ENCODE measurements at regions of chr1 and their contacts with region 1.

Region 1: DNA sequence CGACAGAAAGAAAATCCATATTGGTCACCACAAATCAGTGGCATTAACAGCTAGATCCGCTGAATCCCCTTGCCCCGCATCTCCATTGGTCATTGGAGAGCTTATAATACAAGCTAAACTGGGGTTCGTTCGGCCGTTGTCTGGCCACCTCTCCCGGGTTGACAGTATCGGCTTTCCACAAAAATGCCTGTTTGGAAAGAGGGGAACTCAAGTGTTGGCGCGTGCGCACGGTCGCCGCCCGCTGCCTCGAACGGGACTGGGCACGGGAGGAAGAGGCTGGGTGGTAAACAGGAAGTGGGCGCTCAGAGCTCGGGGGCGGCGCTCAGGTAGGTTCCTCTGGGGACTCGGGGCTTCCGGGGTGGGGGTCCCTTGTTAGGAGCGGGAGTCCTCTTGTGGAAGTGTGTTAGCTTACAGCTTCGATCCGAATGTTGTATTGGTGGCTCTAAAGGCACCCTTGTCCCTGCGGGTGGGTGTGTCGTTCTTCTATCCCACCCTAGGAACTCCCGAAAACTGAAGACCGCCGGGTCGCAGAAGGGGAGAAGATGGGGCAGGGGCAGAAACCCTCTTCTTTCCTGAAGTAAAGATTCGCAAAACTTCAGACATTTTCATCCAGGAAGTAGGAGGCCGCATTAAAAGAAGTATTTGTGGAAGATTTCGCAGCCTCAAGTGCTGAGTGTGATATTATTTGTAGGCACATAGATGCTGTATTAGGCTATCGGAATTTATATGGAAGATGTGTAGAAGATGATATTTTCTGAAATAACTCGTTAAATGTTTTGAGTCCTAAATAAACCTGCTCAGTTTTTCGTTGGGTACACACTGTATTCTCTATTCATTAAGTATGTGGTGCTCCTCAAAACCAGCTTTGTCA is 962 bp downstream of the BROX start:
- DNase-seq: peak; percentile 99
- H3K4me3 Mint-ChIP-seq: peak overlapping the region; percentile 86
- H3K27ac Mint-ChIP-seq: peak overlapping the region; percentile 97
- H3K4me1 Mint-ChIP-seq: peaks cover 40% of the 10 kb centered on the region
- H3K27me3 Mint-ChIP-seq: no peaks in the 10 kb centered on the region
- CTCF ChIP-seq: no peak

Region 2: DNA sequence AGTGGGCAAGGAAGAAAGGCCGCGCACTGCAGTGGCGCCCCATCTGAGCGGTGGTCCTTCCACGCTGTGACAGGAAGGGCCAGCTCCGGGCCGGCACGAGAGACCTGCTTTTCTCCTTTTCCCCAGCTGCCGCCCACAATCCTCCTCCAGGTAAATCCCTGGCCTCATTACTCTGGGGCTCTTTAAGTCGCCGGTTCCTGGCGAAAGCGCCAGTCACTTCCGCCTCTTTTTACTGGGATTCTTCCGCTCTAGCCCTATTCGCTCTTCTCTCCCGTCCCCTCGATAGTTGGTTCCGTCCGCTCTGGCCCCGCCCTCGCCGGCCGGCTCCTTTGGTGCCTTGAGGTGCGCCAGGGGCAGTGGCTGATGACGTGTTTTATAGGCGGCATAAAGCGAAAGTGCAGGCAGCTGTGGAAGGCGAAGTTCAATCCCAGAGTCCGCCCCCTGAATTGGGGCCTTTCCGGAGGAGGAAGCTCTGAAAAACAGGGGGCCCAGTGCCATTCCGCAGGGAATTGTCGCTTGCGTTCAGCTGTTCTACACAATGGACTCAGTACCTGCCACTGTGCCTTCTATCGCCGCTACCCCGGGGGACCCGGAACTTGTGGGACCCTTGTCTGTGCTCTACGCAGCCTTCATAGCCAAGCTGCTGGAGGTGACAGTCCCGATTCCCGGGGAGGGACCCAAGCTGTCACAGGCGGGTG is 69.2 kb before region 1 on chr1:
- CTCF ChIA-PET with region 1: interaction called, 3 read pairs
- POLR2A ChIA-PET with region 1: interaction called, 70 read pairs
- intact Hi-C with region 1: loop called (anchors 1 kb)
- DNase-seq: peak; percentile 100
- H3K4me3 Mint-ChIP-seq: peak overlapping the region; percentile 85
- H3K27ac Mint-ChIP-seq: peak overlapping the region; percentile 97
- H3K4me1 Mint-ChIP-seq: peaks cover 10% of the 10 kb centered on the region
- H3K27me3 Mint-ChIP-seq: no peaks in the 10 kb centered on the region
- CTCF ChIP-seq: no peak

Region 3: GRCh38 chr1:222654849-222655248 is 58.5 kb before region 1 on chr1:
- CTCF ChIA-PET with region 1: no interaction called
- POLR2A ChIA-PET with region 1: interaction called, 11 read pairs
- intact Hi-C with region 1: no loop called
- DNase-seq: no peak
- H3K4me3 Mint-ChIP-seq: no peak overlapping the region
- H3K27ac Mint-ChIP-seq: peak overlapping the region; percentile 1
- H3K4me1 Mint-ChIP-seq: no peaks in the 10 kb centered on the region
- H3K27me3 Mint-ChIP-seq: no peaks in the 10 kb centered on the region
- CTCF ChIP-seq: no peak

Region 4: DNA sequence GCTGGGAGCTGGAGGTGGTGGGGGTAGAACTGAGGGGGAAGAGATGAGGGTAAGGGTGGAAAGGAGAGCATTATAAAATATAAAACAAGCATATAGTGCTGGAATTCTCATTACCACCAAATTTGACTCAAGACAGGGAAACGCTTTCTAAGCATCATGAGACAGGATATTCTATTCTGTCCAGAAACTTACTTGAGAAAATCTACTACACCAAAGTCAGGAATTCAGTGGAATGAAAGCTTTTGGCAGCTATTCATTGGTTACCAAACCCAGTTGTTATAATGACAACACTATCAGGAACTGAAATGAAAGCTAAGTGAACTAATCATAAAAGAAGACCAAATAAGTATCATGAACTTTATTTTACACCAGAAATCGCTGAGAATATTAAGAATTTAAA is 15.5 kb before region 1 on chr1:
- CTCF ChIA-PET with region 1: interaction called, 5 read pairs
- POLR2A ChIA-PET with region 1: interaction called, 40 read pairs
- intact Hi-C with region 1: no loop called
- DNase-seq: no peak
- H3K4me3 Mint-ChIP-seq: no peak overlapping the region
- H3K27ac Mint-ChIP-seq: peak overlapping the region; percentile 66
- H3K4me1 Mint-ChIP-seq: peaks cover 9% of the 10 kb centered on the region
- H3K27me3 Mint-ChIP-seq: no peaks in the 10 kb centered on the region
- CTCF ChIP-seq: no peak

Region 5: DNA sequence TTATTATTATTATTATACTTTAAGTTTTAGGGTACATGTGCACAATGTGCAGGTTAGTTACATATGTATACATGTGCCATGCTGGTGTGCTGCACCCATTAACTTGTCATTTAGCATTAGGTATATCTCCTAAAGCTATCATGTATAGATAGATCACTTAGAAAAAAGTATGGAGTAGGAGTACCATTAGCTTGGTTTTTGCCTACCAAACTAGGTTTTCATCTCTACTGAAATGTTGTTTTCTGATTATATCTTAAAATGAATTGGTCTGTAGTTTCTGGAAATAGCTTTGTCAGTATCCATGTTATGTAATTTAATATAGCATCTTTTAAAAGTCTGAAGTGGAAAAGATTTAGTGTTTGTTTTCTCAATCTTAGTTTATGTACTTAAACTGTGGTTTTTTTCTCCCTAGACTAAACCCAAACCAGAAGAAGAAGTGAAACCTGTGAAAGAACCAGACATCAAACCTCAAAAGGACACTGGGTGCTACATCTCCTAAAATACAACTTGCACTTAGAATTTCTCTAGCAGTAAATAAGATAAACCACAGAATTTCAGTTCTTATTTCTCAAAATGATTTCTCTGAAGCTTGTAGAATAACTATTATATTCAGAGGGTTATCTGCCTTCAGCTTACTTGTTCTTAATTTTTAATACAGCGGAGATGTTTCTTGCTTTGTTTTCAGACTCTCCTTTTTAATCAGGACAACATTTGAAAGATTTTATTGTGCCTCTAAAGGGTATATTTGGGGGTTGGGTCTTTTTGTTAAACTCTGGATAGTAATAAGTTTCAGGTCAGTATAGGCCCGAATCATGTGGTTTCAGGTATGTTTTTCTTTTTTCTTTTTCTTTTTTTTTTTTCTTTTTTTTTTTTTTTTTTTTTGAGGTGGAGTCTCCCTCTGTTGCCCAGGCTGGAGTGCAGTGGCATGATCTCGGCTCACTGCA is 19.2 kb after region 1 on chr1:
- CTCF ChIA-PET with region 1: interaction called, 9 read pairs
- POLR2A ChIA-PET with region 1: interaction called, 32 read pairs
- intact Hi-C with region 1: no loop called
- DNase-seq: no peak
- H3K4me3 Mint-ChIP-seq: no peak overlapping the region
- H3K27ac Mint-ChIP-seq: no peak overlapping the region
- H3K4me1 Mint-ChIP-seq: no peaks in the 10 kb centered on the region
- H3K27me3 Mint-ChIP-seq: no peaks in the 10 kb centered on the region
- CTCF ChIP-seq: no peak

Region 6: DNA sequence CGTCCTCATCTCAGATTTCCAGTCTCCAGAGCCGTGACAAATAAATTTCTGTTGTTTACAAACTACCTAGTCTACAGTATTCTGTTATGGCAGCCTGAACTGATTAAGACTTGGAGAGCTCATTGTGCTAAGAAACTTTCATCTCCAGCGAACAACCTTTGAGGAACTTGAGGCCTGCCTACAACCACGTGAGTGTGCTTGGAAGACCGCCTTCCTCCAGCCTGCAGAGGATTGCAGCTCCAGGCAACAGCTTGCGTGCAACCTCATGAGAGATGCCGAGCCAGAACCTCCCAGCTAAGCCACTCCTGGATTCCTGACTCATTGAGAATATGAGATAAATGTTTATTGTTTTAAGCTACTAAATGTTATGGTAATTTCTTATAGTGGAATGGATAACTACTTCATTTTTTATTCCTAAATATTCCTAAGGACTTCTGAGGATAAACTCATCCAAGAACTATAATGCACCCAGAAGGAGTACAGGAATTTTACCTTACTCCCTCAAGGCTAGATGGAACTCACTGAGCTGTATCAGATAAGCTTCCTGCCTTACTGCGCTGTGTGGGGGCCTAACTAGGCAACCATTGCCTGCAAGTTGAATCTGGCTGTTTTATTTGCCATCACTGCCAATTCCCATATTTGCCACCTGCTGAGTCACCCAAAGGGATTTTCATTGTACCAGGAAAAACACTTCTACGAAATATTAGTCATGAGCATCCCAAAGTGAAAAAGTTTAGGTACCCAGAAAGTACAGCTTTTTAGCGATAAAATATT is 41.2 kb after region 1 on chr1:
- CTCF ChIA-PET with region 1: no interaction called
- POLR2A ChIA-PET with region 1: interaction called, 14 read pairs
- intact Hi-C with region 1: loop called (anchors 1 kb)
- DNase-seq: peak; percentile 98
- H3K4me3 Mint-ChIP-seq: peak overlapping the region; percentile 46
- H3K27ac Mint-ChIP-seq: peak overlapping the region; percentile 86
- H3K4me1 Mint-ChIP-seq: peaks cover 28% of the 10 kb centered on the region
- H3K27me3 Mint-ChIP-seq: no peaks in the 10 kb centered on the region
- CTCF ChIP-seq: no peak

Region 7: DNA sequence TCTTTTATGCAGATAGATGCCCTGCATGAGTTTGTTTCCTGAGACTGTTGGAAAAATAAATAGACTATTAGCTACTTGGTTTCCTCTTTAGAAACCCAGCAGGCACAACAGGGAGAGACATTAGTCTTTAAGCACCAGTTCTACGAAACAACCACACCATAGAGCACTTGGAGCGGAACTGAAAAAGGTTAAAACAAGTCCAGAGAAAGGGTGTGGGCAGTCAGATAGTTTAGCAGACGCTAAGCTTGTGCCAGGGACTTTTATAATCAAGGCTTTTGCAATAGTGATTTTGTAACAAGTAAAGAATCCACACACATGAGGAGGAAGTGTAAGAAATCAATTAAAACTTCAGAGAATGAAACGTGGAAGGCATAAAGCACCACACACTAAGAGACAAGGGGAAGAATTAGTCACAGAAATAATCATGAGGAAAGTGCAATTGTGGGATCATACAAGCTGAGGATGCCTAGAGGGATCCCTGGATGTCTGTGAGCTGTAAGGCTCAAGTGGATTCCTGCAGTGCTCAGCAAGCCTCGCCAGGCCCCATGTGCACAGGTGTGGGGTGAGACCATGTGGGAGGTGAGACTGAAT is 467.5 kb after region 1 on chr1:
- CTCF ChIA-PET with region 1: no interaction called
- POLR2A ChIA-PET with region 1: no interaction called
- intact Hi-C with region 1: no loop called
- DNase-seq: peak; percentile 92
- H3K4me3 Mint-ChIP-seq: no peak overlapping the region
- H3K27ac Mint-ChIP-seq: peak overlapping the region; percentile 9
- H3K4me1 Mint-ChIP-seq: peaks cover 33% of the 10 kb centered on the region
- H3K27me3 Mint-ChIP-seq: no peaks in the 10 kb centered on the region
- CTCF ChIP-seq: no peak

Measured in MCF 10A (cell line).